Activated CD4-positive, alpha-beta memory T cell treated with anti-CD3 and anti-CD28 coated beads, Interleukin-2, amount 10 ng/mL, durations not matched to agents 7 days and 5 days (primary cell): ENCODE measurements at regions of chr17 and their contacts with region 1.

Region 1: DNA sequence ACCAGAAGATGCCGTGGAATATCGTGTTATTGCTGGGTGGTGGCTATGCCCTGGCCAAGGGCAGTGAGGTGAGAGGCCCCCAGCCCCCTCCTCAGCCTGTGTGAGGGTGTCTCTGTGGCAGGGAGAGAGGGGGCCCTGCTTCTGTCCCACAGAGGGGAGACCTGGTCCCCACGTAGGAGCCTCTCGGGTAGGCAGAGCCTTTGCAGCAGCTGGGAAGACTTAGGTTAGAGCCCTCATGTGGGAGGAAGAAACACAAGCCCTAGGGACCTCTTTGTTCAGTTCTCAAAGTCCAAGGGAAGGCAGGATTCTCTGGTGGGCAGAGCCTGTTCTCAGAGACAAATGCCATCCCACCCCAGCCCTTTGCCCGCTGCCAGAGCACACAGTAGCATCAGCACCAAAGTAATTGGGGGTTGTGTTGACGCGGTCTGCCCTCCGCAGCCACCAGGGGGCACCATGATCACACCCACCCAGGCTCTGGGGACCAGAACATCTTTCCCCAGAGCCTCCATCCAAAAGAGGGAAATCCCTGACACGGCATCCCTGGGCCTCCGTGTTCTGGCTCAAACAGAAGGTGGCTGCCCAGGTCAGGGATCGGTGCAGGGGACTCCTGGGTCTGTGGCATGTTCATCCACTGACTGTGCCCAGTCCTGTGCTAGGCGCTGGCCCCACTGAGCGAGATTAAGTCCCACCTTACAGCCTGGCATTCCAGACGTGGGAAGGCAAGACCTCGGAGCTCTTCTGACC is 11.5 kb upstream of the FOXN1 start:
- DNase-seq: peak; percentile 77
- H3K4me3 Mint-ChIP-seq: no peak overlapping the region
- H3K27ac Mint-ChIP-seq: no peak overlapping the region
- H3K4me1 Mint-ChIP-seq: no peaks in the 10 kb centered on the region
- H3K27me3 Mint-ChIP-seq: peaks cover 8% of the 10 kb centered on the region

Region 2: DNA sequence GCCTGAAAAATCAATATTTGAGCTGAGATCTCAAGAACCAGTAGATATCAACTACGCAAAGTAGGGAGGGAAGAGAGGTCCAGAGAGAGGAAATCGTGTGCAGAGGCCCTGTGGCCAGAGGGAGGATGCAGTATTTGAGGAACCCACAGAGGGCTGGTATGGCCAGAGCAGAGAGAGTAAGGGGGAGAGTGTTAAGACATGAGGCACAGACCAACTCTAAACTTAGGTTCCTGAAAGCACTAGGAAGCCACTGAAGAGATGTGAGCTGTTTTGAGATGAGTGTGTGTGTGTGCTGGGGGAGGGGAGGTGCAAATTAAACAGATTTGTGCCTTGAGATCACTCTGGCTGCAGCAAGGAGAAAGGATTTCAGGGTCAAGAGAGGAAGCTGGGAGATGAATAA is 10.3 kb before region 1 on chr17:
- CTCF ChIA-PET with region 1: interaction called, 11 read pairs
- POLR2A ChIA-PET with region 1: no interaction called
- DNase-seq: no peak
- H3K4me3 Mint-ChIP-seq: no peak overlapping the region
- H3K27ac Mint-ChIP-seq: no peak overlapping the region
- H3K4me1 Mint-ChIP-seq: peaks cover 14% of the 10 kb centered on the region
- H3K27me3 Mint-ChIP-seq: no peaks in the 10 kb centered on the region